BJ (cell line): ENCODE measurements at regions of chr2 and their contacts with region 1.

Region 1: GRCh38 chr2:163171786-163172531 is 333.4 kb upstream of the KCNH7 start:
- DNase-seq: no peak
- H3K4me3 ChIP-seq: no peak overlapping the region
- H3K27me3 ChIP-seq: no peaks in the 10 kb centered on the region
- CTCF ChIP-seq: no peak

Region 2: GRCh38 chr2:163182764-163183354 is 10.9 kb after region 1 on chr2:
- CTCF ChIA-PET with region 1: interaction called, 21 read pairs
- POLR2A ChIA-PET with region 1: no interaction called
- DNase-seq: no peak
- H3K4me3 ChIP-seq: no peak overlapping the region
- H3K27me3 ChIP-seq: no peaks in the 10 kb centered on the region
- CTCF ChIP-seq: peak; percentile 57

Region 3: GRCh38 chr2:163774858-163775257 is 602.9 kb after region 1 on chr2:
- CTCF ChIA-PET with region 1: no interaction called
- POLR2A ChIA-PET with region 1: no interaction called
- DNase-seq: peak; percentile 53
- H3K4me3 ChIP-seq: no peak overlapping the region
- H3K27me3 ChIP-seq: no peaks in the 10 kb centered on the region
- CTCF ChIP-seq: no peak